Kidney (tissue), 22 donors: ENCODE measurements at regions of chr7 and their contacts with region 1.

Region 1: GRCh38 chr7:50467817-50468610 is 17.9 kb upstream of the FIGNL1 start:
- DNase-seq: peak; percentile 75 to 91 (median 83)
- H3K4me3 ChIP-seq: no peak overlapping the region
- H3K27ac ChIP-seq: no peak overlapping the region
- H3K4me1 ChIP-seq: peaks cover 0 to 5% (median 0%) of the 10 kb centered on the region in 3 donors
- H3K27me3 ChIP-seq: no peaks in the 10 kb centered on the region
- CTCF ChIP-seq: peak; percentile 77

Region 2: DNA sequence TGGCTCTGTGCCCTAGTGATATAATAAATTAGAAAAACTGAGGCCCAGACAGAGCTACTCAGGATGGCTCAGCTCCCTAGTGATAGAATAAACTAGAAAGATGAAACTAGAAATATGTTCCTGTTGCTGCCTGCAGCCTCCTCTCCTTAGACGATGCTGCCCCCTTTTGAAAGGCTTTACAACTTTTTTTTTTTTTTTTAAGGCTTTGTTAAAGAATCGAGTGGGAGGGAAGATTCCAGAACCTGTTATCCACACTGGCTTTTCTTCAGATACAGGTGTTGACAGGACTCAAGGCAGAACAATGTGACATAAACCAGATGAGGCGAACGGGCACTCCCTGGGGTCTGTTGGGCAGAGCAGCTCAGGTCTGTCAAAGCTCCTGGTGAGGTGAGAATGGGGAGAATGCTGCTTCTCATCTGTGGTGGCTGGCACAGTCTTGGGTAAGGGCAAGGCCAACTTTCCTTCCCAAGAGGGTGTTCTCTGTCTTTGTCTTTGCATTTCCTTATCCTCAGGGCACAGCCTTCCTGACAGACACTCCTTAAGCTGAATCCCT is 673.5 kb after region 1 on chr7:
- intact Hi-C with region 1: loop called (anchors 10 kb)
- DNase-seq: peak in 1 of 5 donors; percentile 58
- H3K4me3 ChIP-seq: no peak overlapping the region
- H3K27ac ChIP-seq: peak overlapping the region; percentile 53 to 74
- H3K4me1 ChIP-seq: peaks cover 0 to 3% (median 0%) of the 10 kb centered on the region in 3 donors
- H3K27me3 ChIP-seq: no peaks in the 10 kb centered on the region
- CTCF ChIP-seq: peak; percentile 37

Region 3: DNA sequence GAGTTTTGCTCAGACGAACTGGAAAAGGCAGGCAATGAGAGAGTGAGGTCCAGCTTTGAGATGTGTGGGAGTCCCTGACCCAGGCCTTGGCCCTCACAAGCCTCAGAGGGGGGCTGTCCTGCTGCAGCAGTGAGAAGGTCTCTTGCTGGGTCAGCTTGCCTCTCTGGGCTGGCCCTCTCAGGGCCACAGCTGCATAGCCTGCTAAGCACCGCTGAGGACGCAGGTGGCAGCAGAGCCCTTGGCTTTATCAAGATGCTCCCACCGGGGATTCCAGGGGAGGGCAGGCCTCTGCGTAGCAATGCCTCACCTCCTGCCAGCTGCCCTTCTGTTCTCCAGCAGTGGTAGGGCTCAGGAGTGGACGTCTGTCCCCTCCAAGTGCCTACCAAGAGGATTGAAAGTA is 719.9 kb after region 1 on chr7:
- intact Hi-C with region 1: no loop called
- DNase-seq: peak in 4 of 5 donors; percentile 48 to 65 (median 64)
- H3K4me3 ChIP-seq: no peak overlapping the region
- H3K27ac ChIP-seq: no peak overlapping the region
- H3K4me1 ChIP-seq: no peaks in the 10 kb centered on the region
- H3K27me3 ChIP-seq: no peaks in the 10 kb centered on the region
- CTCF ChIP-seq: peak; percentile 40